Activated CD4-positive, alpha-beta memory T cell treated with anti-CD3 and anti-CD28 coated beads for 36 hours (primary cell): ENCODE measurements at regions of chr11 and their contacts with region 1.

Region 1: GRCh38 chr11:19800162-19800561 is 87.5 kb downstream of the NAV2 start:
- DNase-seq: no peak
- H3K4me3 Mint-ChIP-seq: no peak overlapping the region
- H3K27ac Mint-ChIP-seq: no peak overlapping the region
- H3K4me1 Mint-ChIP-seq: no peaks in the 10 kb centered on the region
- H3K27me3 Mint-ChIP-seq: no peaks in the 10 kb centered on the region

Region 2: DNA sequence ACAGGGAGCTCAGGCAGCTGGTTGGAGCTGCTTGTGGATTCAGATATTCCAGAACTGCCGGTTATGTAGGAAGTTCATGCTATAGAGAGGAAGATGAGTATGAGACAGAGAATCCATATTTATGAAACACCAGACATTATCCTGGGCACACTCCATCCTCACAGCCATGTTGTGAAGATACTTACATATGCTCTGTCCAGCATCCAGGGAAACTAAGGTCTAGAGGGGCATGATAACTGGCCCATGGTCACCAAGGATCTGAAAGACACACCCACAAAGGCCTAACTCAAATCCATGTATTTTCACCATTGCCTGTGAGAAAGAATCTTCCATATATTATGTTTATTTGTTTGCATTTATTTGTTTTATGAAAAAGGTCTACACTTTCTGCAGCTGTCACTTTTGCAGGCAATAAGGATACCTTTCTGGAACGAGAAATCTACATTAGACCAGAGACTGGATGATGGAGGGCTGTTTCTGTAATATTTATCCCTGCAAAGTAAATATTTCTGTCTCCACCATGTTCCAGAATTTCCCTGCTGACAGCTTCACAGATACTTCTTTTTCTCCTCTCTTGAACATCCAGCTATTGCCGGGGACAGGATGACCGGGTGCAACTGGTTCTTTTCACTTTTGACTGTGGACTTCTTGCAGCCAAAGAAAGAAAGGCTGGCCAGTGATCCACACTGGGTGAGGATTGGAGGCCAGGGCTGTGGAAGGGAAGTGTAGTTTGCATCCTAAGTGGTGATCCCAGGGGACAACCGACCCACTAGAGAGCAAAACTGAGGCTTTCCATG is 233.4 kb before region 1 on chr11:
- CTCF ChIA-PET with region 1: interaction called, 3 read pairs
- POLR2A ChIA-PET with region 1: no interaction called
- intact Hi-C with region 1: loop called (anchors 2 kb)
- DNase-seq: no peak
- H3K4me3 Mint-ChIP-seq: no peak overlapping the region
- H3K27ac Mint-ChIP-seq: no peak overlapping the region
- H3K4me1 Mint-ChIP-seq: no peaks in the 10 kb centered on the region
- H3K27me3 Mint-ChIP-seq: peaks cover 8% of the 10 kb centered on the region

Region 3: GRCh38 chr11:19742588-19743292 is 57.4 kb before region 1 on chr11:
- CTCF ChIA-PET with region 1: no interaction called
- POLR2A ChIA-PET with region 1: no interaction called
- intact Hi-C with region 1: no loop called
- DNase-seq: peak; percentile 83
- H3K4me3 Mint-ChIP-seq: no peak overlapping the region
- H3K27ac Mint-ChIP-seq: no peak overlapping the region
- H3K4me1 Mint-ChIP-seq: no peaks in the 10 kb centered on the region
- H3K27me3 Mint-ChIP-seq: no peaks in the 10 kb centered on the region